AG04450 (cell line): ENCODE measurements at regions of chr10 and their contacts with region 1.

Region 1: GRCh38 chr10:104580774-104581675 is 60.1 kb upstream of the SORCS3 start:
- DNase-seq: peak; percentile 38
- H3K4me3 ChIP-seq: peak overlapping the region; percentile 2; the same call in 1 of the 2 replicates
- H3K27ac ChIP-seq: no peak overlapping the region
- H3K27me3 ChIP-seq: no peaks in the 10 kb centered on the region
- CTCF ChIP-seq: peak; percentile 90

Region 2: GRCh38 chr10:104406715-104407650 is 174.0 kb before region 1 on chr10:
- CTCF ChIA-PET with region 1: interaction called, 10 read pairs
- POLR2A ChIA-PET with region 1: no interaction called
- DNase-seq: peak; percentile 3
- H3K4me3 ChIP-seq: no peak overlapping the region
- H3K27ac ChIP-seq: no peak overlapping the region
- H3K27me3 ChIP-seq: no peaks in the 10 kb centered on the region
- CTCF ChIP-seq: peak; percentile 71

Region 3: GRCh38 chr10:104614245-104614831 is 33.3 kb after region 1 on chr10:
- CTCF ChIA-PET with region 1: interaction called, 22 read pairs
- POLR2A ChIA-PET with region 1: no interaction called
- DNase-seq: no peak
- H3K4me3 ChIP-seq: no peak overlapping the region
- H3K27ac ChIP-seq: no peak overlapping the region
- H3K27me3 ChIP-seq: no peaks in the 10 kb centered on the region
- CTCF ChIP-seq: peak; percentile 60